ENCODE measurements at regions of chr1 and their contacts with region 1.

Region 1: GRCh38 chr1:75203415-75204277 is 69.5 kb downstream of the LHX8 start:
- DNase-seq: peak; percentile 35 to 44 (median 42)
- ATAC-seq: peak; percentile 92
- H3K4me3 ChIP-seq: no peak overlapping the region
- H3K27ac ChIP-seq: no peak overlapping the region
- H3K4me1 ChIP-seq: no peaks in the 10 kb centered on the region
- H3K27me3 ChIP-seq: no peaks in the 10 kb centered on the region
- CTCF ChIP-seq: peak; percentile 75 to 98 (median 93); a peak in 5 of 6 replicates
- EP300 ChIP-seq: no peak
- POLR2A ChIP-seq: no peak
- RAD21 ChIP-seq: peak; percentile 64 to 85

Region 2: GRCh38 chr1:75083848-75084514 is 119.7 kb before region 1 on chr1:
- CTCF ChIA-PET with region 1: no interaction called
- POLR2A ChIA-PET with region 1: no interaction called
- in situ Hi-C with region 1: no loop called
- intact Hi-C with region 1: no loop called
- DNase-seq: no peak
- ATAC-seq: no peak
- H3K4me3 ChIP-seq: no peak overlapping the region
- H3K27ac ChIP-seq: no peak overlapping the region
- H3K4me1 ChIP-seq: no peaks in the 10 kb centered on the region
- H3K27me3 ChIP-seq: no peaks in the 10 kb centered on the region
- CTCF ChIP-seq: no peak
- EP300 ChIP-seq: no peak
- POLR2A ChIP-seq: no peak
- RAD21 ChIP-seq: no peak

Region 3: GRCh38 chr1:75134647-75135572 is 68.7 kb before region 1 on chr1:
- CTCF ChIA-PET with region 1: no interaction called
- POLR2A ChIA-PET with region 1: no interaction called
- in situ Hi-C with region 1: no loop called
- intact Hi-C with region 1: loop called (anchors 5 kb)
- DNase-seq: no peak
- ATAC-seq: no peak; the same call in 2 of the 3 replicates
- H3K4me3 ChIP-seq: no peak overlapping the region
- H3K27ac ChIP-seq: no peak overlapping the region
- H3K4me1 ChIP-seq: peaks cover 0 to 10% of the 10 kb centered on the region in 2 experiments; a peak in 1 of 5 replicates
- H3K27me3 ChIP-seq: peaks cover 65 to 66% of the 10 kb centered on the region in 2 experiments
- CTCF ChIP-seq: no peak
- EP300 ChIP-seq: no peak
- POLR2A ChIP-seq: no peak
- RAD21 ChIP-seq: no peak

Region 4: GRCh38 chr1:76408303-76408702 is 1204.7 kb after region 1 on chr1:
- CTCF ChIA-PET with region 1: no interaction called
- POLR2A ChIA-PET with region 1: no interaction called
- in situ Hi-C with region 1: no loop called
- intact Hi-C with region 1: no loop called
- DNase-seq: no peak
- ATAC-seq: no peak
- H3K4me3 ChIP-seq: no peak overlapping the region
- H3K27ac ChIP-seq: no peak overlapping the region
- H3K4me1 ChIP-seq: no peaks in the 10 kb centered on the region
- H3K27me3 ChIP-seq: no peaks in the 10 kb centered on the region
- CTCF ChIP-seq: no peak
- EP300 ChIP-seq: no peak
- POLR2A ChIP-seq: no peak
- RAD21 ChIP-seq: no peak